ENCODE measurements at regions of chr2 and their contacts with region 1.

Region 1: GRCh38 chr2:102355526-102356380 is at the start of gene IL18R1:
- DNase-seq: peak; percentile 87
- H3K4me3 Mint-ChIP-seq: peak within 1 kb of the TSS; percentile 84
- H3K27ac Mint-ChIP-seq: peak within 1 kb of the TSS; percentile 77
- H3K4me1 Mint-ChIP-seq: no peaks in the 10 kb centered on the region
- H3K27me3 Mint-ChIP-seq: peaks cover 14% of the 10 kb centered on the region
- CTCF ChIP-seq: peak; percentile 69
- total RNA-seq, gene IL18R1: 1.5 and 2.1 TPM in 2 replicates

Region 2: GRCh38 chr2:101883863-101884262 is 471.9 kb before region 1 on chr2:
- CTCF ChIA-PET with region 1: interaction called, 3 read pairs
- intact Hi-C with region 1: loop called (anchors 10 kb)
- DNase-seq: peak; percentile 28
- H3K4me3 Mint-ChIP-seq: no peak overlapping the region
- H3K27ac Mint-ChIP-seq: no peak overlapping the region
- H3K4me1 Mint-ChIP-seq: no peaks in the 10 kb centered on the region
- H3K27me3 Mint-ChIP-seq: no peaks in the 10 kb centered on the region
- CTCF ChIP-seq: peak; percentile 44

Region 3: DNA sequence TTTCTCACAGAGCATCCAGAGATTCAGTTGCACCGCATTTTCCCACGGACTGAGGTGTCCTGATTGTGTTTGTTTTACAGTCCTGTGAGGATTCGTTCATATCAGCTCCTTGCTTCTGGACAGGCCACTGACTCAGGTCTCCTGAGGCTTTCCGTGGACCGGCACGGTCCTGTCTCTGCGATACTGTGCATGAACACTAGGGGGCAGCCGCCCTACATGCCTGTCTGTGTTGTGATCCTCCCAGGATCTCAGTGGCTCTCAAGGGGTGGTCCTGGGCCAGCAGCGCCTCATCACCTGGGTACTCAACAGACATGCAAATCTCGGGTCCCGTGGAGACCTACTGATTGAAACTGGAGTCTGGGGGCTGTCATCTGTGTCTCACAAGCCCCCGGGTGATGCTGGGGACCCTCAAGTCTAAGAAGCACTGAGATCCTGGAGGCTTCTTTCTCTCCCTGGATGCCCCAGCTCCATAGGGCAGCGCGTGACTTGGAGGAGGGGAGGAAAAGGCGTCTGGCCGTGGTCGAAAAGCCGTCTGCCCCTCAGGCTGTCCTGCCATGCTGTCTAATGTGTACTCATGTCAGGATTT is 335.1 kb before region 1 on chr2:
- CTCF ChIA-PET with region 1: no interaction called
- intact Hi-C with region 1: loop called (anchors 10 kb)
- DNase-seq: peak; percentile 90
- H3K4me3 Mint-ChIP-seq: no peak overlapping the region
- H3K27ac Mint-ChIP-seq: no peak overlapping the region
- H3K4me1 Mint-ChIP-seq: peaks cover 14% of the 10 kb centered on the region
- H3K27me3 Mint-ChIP-seq: no peaks in the 10 kb centered on the region
- CTCF ChIP-seq: peak; percentile 95

Region 4: GRCh38 chr2:102251042-102251848 is 104.5 kb before region 1 on chr2:
- CTCF ChIA-PET with region 1: interaction called, 5 read pairs
- intact Hi-C with region 1: loop called (anchors 5 kb)
- DNase-seq: peak; percentile 81
- H3K4me3 Mint-ChIP-seq: peak overlapping the region; percentile 75
- H3K27ac Mint-ChIP-seq: peak overlapping the region; percentile 22
- H3K4me1 Mint-ChIP-seq: peaks cover 19% of the 10 kb centered on the region
- H3K27me3 Mint-ChIP-seq: peaks cover 8% of the 10 kb centered on the region
- CTCF ChIP-seq: peak; percentile 81

Region 5: DNA sequence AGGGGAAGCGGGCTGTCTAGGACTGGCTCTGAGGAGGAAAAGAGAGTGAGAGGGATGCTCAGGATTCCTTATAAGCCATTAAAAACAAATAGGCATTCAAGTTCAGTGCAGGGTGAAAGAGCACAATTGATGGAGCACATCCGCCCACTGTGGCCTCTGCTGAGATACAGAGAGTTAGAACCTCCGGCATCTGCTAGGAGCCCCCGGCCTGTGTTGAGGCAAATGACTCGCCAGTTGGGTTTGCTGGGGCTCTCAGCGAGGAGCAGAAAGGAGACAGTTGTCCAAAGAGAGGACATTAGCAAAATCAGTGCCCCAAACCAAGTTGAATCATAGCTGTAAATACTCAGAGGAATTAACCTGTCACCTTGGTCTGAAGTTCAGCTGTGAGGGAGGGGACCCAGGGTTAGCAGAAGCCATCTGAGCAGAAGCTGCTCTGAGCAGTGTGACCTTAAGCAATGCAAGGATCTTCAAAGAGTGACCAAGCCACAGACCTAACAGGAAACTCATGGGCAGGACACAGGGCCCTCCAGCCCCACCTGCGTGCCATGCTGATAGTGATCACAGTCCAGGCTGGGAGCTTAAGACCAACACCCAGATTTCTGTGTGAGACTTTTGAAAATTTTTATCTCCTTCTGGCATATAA is 43.9 kb after region 1 on chr2:
- CTCF ChIA-PET with region 1: no interaction called
- intact Hi-C with region 1: no loop called
- DNase-seq: no peak
- H3K4me3 Mint-ChIP-seq: no peak overlapping the region
- H3K27ac Mint-ChIP-seq: no peak overlapping the region
- H3K4me1 Mint-ChIP-seq: no peaks in the 10 kb centered on the region
- H3K27me3 Mint-ChIP-seq: peaks cover 11% of the 10 kb centered on the region
- CTCF ChIP-seq: no peak